Activated B cell treated with CpG ODN at 0.5 μM for 24 hours (primary cell): ENCODE measurements at regions of chr2 and their contacts with region 1.

Region 1: DNA sequence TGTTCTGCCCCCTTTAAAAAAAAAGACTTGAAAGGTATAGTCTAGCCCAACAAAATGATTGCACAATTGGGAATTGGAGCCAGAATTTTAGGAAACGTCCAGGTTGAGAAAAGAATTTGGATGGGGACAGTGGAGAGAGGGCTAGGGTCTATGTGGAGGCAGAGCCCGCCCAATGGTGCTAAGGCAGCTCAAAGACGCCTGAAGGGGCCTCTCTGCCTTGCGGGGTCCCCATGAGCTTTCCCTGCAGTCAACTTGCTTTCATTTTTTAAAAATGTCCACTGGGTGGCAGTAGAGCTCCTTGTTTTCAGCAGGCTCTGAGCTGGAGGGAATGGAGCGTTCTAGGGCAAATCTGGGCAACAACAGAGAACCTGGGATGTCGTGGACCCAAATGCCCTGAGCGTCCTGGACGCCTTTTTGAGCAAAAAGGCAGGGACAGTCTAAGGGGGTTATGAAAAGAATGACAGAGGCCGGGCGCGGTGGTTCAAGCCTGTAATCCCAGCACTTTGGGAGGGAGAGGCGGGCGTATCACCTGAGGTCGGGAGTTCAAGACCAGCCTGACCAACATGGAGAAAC is 40.2 kb upstream of the ITM2C start:
- DNase-seq: no peak
- ATAC-seq: peak; percentile 77
- H3K4me3 Mint-ChIP-seq: peak overlapping the region; percentile 38
- H3K27ac Mint-ChIP-seq: peak overlapping the region; percentile 1
- H3K4me1 Mint-ChIP-seq: peaks cover 9% of the 10 kb centered on the region
- H3K27me3 Mint-ChIP-seq: peaks cover 29% of the 10 kb centered on the region
- CTCF ChIP-seq: no peak

Region 2: GRCh38 chr2:230784795-230785194 is 39.7 kb before region 1 on chr2:
- CTCF ChIA-PET with region 1: no interaction called
- POLR2A ChIA-PET with region 1: no interaction called
- intact Hi-C with region 1: no loop called
- DNase-seq: no peak
- ATAC-seq: no peak
- H3K4me3 Mint-ChIP-seq: no peak overlapping the region
- H3K27ac Mint-ChIP-seq: no peak overlapping the region
- H3K4me1 Mint-ChIP-seq: peaks cover 37% of the 10 kb centered on the region
- H3K27me3 Mint-ChIP-seq: no peaks in the 10 kb centered on the region
- CTCF ChIP-seq: no peak

Region 3: DNA sequence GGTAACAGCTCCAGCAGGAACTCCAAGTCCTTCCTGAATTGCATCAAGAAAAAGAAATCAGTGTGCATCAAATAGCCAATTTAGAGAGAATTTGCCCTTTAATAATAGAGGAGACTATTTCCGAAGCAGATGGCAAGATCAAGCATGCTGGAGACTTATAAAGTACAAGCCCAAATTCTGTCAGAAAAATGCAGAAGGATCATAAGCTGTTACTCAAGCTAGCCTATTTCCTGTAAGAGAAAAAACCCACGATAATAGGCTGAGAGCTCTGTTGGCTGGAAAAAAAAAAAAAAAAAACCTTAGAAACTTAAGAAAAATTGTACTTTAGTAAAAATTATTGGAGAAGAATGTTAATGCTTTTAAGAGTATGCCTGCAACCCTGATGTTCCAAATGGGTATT is 15.8 kb after region 1 on chr2:
- CTCF ChIA-PET with region 1: interaction called, 12 read pairs
- POLR2A ChIA-PET with region 1: interaction called, 3 read pairs
- intact Hi-C with region 1: no loop called
- DNase-seq: no peak
- ATAC-seq: no peak
- H3K4me3 Mint-ChIP-seq: no peak overlapping the region
- H3K27ac Mint-ChIP-seq: no peak overlapping the region
- H3K4me1 Mint-ChIP-seq: no peaks in the 10 kb centered on the region
- H3K27me3 Mint-ChIP-seq: peaks cover 9% of the 10 kb centered on the region
- CTCF ChIP-seq: no peak

Region 4: GRCh38 chr2:230847883-230848388 is 23.4 kb after region 1 on chr2:
- CTCF ChIA-PET with region 1: interaction called, 27 read pairs
- POLR2A ChIA-PET with region 1: no interaction called
- intact Hi-C with region 1: loop called (anchors 1 kb)
- DNase-seq: peak; percentile 84
- ATAC-seq: peak; percentile 97
- H3K4me3 Mint-ChIP-seq: peak overlapping the region; percentile 50
- H3K27ac Mint-ChIP-seq: no peak overlapping the region
- H3K4me1 Mint-ChIP-seq: peaks cover 8% of the 10 kb centered on the region
- H3K27me3 Mint-ChIP-seq: peaks cover 22% of the 10 kb centered on the region
- CTCF ChIP-seq: peak; percentile 24

Region 5: GRCh38 chr2:230913406-230914143 is 89.1 kb after region 1 on chr2:
- CTCF ChIA-PET with region 1: interaction called, 30 read pairs
- POLR2A ChIA-PET with region 1: no interaction called
- intact Hi-C with region 1: loop called (anchors 1 kb)
- DNase-seq: peak; percentile 16
- ATAC-seq: peak; percentile 94
- H3K4me3 Mint-ChIP-seq: no peak overlapping the region
- H3K27ac Mint-ChIP-seq: no peak overlapping the region
- H3K4me1 Mint-ChIP-seq: peaks cover 18% of the 10 kb centered on the region
- H3K27me3 Mint-ChIP-seq: peaks cover 1% of the 10 kb centered on the region
- CTCF ChIP-seq: no peak

Region 6: GRCh38 chr2:231056453-231057424 is 232.2 kb after region 1 on chr2 and contains the start of gene PSMD1:
- CTCF ChIA-PET with region 1: interaction called, 26 read pairs
- POLR2A ChIA-PET with region 1: no interaction called
- intact Hi-C with region 1: loop called (anchors 1 kb)
- DNase-seq: peak; percentile 90
- ATAC-seq: peak; percentile 85
- H3K4me3 Mint-ChIP-seq: peak within 1 kb of the TSS; percentile 98
- H3K27ac Mint-ChIP-seq: peak within 1 kb of the TSS; percentile 100
- H3K4me1 Mint-ChIP-seq: peaks cover 43% of the 10 kb centered on the region
- H3K27me3 Mint-ChIP-seq: peaks cover 3% of the 10 kb centered on the region
- CTCF ChIP-seq: peak; percentile 65
- total RNA-seq, gene PSMD1: 99.9 and 105 TPM in 2 replicates